ENCODE measurements at regions of chr2 and their contacts with region 1.

Region 1: GRCh38 chr2:25131567-25132298 is 36.6 kb downstream of the POMC start:
- DNase-seq: no peak
- ATAC-seq: peak; percentile 29
- H3K4me3 Mint-ChIP-seq: peak overlapping the region; percentile 44
- H3K27ac Mint-ChIP-seq: no peak overlapping the region
- H3K4me1 Mint-ChIP-seq: peaks cover 7% of the 10 kb centered on the region
- H3K27me3 Mint-ChIP-seq: peaks cover 52% of the 10 kb centered on the region

Region 2: DNA sequence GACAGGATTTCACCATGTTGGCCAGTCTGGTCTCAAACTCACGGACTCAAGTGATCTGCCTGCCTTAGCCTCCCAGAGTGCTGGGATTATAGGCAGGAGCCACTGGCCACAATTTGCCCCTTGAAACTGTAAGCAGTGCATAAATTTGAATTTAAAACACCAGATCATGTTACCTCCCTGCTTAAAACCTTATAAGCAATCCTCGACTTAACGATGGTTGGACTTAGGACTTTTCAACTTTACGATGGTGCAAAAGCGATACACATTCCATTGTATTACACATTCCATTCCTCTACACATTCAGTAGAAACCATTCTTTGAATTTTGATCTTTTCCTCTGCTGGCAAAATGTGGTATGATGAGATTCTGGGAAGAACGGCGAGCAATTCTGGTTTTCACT is 113.1 kb before region 1 on chr2:
- CTCF ChIA-PET with region 1: no interaction called
- POLR2A ChIA-PET with region 1: no interaction called
- DNase-seq: no peak
- ATAC-seq: no peak
- H3K4me3 Mint-ChIP-seq: no peak overlapping the region
- H3K27ac Mint-ChIP-seq: no peak overlapping the region
- H3K4me1 Mint-ChIP-seq: no peaks in the 10 kb centered on the region
- H3K27me3 Mint-ChIP-seq: peaks cover 7% of the 10 kb centered on the region

Region 3: DNA sequence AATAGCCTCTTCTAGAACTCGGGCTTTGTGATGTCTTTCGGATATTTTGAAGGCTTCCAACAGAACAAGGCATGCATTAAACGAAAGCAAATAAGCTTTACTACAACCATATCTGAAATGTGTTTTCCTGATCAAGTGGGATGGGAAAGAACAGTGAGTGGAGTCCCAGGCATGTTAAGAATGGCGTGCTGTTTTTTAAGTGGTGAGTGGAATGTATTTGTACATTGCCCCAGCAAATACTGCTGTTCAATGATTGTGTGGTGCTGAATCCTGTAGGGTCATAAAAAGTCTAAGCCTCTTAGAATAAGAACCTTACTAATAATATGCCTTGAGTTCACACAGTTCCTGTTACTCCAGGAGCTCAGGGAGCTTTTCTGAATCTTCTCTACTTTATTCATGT is 15.8 kb before region 1 on chr2:
- CTCF ChIA-PET with region 1: interaction called, 16 read pairs
- POLR2A ChIA-PET with region 1: no interaction called
- DNase-seq: no peak
- ATAC-seq: no peak
- H3K4me3 Mint-ChIP-seq: no peak overlapping the region
- H3K27ac Mint-ChIP-seq: no peak overlapping the region
- H3K4me1 Mint-ChIP-seq: no peaks in the 10 kb centered on the region
- H3K27me3 Mint-ChIP-seq: peaks cover 5% of the 10 kb centered on the region

Measured in activated CD8-positive, alpha-beta T cell treated with anti-CD3 and anti-CD28 coated beads, Interleukin-2, amount 10 ng/mL, durations not matched to agents 7 days and 5 days (primary cell).